ENCODE measurements at regions of chr17 and their contacts with region 1.

Region 1: GRCh38 chr17:45135192-45135977 is at the start of gene ACBD4:
- DNase-seq: peak; percentile 97
- ATAC-seq: peak; percentile 76
- H3K4me3 Mint-ChIP-seq: peak within 1 kb of the TSS; percentile 72
- H3K27ac Mint-ChIP-seq: no peak within 1 kb of the TSS
- H3K4me1 Mint-ChIP-seq: peaks cover 14% of the 10 kb centered on the region; the same call in 1 of the 2 replicates
- H3K27me3 Mint-ChIP-seq: no peaks in the 10 kb centered on the region; the same call in 1 of the 2 replicates
- CTCF ChIP-seq: peak; percentile 100
- total RNA-seq, gene ACBD4: 12.7 to 21.0 TPM (median 21.0 TPM) in 3 replicates

Region 2: GRCh38 chr17:44911133-44912001 is 224.0 kb before region 1 on chr17:
- CTCF ChIA-PET with region 1: interaction called, 12 read pairs
- POLR2A ChIA-PET with region 1: no interaction called
- DNase-seq: peak; percentile 83
- ATAC-seq: peak; percentile 91
- H3K4me3 Mint-ChIP-seq: peak overlapping the region; percentile 66
- H3K27ac Mint-ChIP-seq: no peak overlapping the region
- H3K4me1 Mint-ChIP-seq: peaks cover 7% of the 10 kb centered on the region
- H3K27me3 Mint-ChIP-seq: peaks cover 41% of the 10 kb centered on the region
- CTCF ChIP-seq: peak; percentile 13; the same call in 1 of the 2 replicates

Region 3: GRCh38 chr17:45013021-45013997 is 122.1 kb before region 1 on chr17:
- CTCF ChIA-PET with region 1: interaction called, 31 read pairs
- POLR2A ChIA-PET with region 1: no interaction called
- DNase-seq: peak; percentile 27
- ATAC-seq: peak; percentile 57
- H3K4me3 Mint-ChIP-seq: no peak overlapping the region
- H3K27ac Mint-ChIP-seq: peak overlapping the region; percentile 21; the same call in 1 of the 2 replicates
- H3K4me1 Mint-ChIP-seq: peaks cover 22% of the 10 kb centered on the region
- H3K27me3 Mint-ChIP-seq: peaks cover 12% of the 10 kb centered on the region
- CTCF ChIP-seq: no peak

Region 4: GRCh38 chr17:45060797-45061605 is 74.4 kb before region 1 on chr17 and contains the start of gene NMT1:
- CTCF ChIA-PET with region 1: interaction called, 19 read pairs
- POLR2A ChIA-PET with region 1: no interaction called
- DNase-seq: peak; percentile 98
- ATAC-seq: peak; percentile 96
- H3K4me3 Mint-ChIP-seq: peak within 1 kb of the TSS; percentile 99
- H3K27ac Mint-ChIP-seq: peak within 1 kb of the TSS; percentile 100
- H3K4me1 Mint-ChIP-seq: peaks cover 4% of the 10 kb centered on the region
- H3K27me3 Mint-ChIP-seq: no peaks in the 10 kb centered on the region
- CTCF ChIP-seq: no peak
- total RNA-seq, gene NMT1: 152 to 162 TPM (median 153 TPM) in 3 replicates

Region 5: DNA sequence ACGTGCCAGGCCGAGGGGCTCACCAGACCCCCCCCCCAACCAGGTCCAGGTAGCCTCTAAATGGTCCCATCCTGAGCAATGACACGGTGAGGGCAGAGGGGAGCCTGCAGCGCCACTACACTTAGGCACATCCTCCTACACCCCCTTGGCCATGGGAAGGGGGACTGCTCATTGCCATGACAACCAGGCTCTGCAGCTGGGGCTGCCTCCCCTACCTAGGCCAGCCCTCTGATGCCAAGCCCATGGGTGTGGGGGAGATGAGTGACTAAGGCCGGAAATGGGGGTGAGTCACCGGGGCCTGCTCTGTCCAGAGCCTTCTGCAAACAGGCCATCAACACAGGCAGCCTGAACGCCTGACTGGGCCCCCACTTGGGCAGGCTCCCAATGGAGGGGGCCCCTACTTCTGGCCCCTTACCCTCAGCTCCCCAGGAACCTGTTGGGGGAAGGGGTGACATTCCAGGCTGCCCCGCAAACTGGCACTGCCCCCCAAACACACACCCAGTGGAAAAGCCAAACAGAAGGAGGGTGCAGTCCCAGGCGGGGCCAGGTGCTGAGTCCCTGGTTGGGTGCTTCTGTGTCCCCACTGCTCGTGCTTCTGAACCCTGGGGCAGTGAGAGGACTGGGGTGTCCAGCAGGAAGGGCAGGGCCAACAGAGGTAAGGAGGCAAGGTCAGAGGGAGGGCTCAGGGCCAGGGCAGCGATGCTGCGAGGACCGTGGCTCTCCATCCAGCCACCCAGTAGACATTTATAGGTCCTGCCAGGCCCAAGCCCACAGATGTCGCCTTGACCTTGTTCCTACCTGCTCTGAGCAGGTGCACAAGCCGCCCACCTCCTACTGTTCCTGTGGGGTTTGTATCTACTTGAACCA is 11.2 kb before region 1 on chr17:
- CTCF ChIA-PET with region 1: interaction called, 27 read pairs
- POLR2A ChIA-PET with region 1: no interaction called
- DNase-seq: no peak
- ATAC-seq: peak; percentile 25
- H3K4me3 Mint-ChIP-seq: no peak overlapping the region
- H3K27ac Mint-ChIP-seq: peak overlapping the region; percentile 65; the same call in 1 of the 2 replicates
- H3K4me1 Mint-ChIP-seq: peaks cover 11% of the 10 kb centered on the region
- H3K27me3 Mint-ChIP-seq: no peaks in the 10 kb centered on the region
- CTCF ChIP-seq: no peak

Region 6: GRCh38 chr17:45184144-45184543 is 48.8 kb after region 1 on chr17:
- CTCF ChIA-PET with region 1: interaction called, 12 read pairs
- POLR2A ChIA-PET with region 1: no interaction called
- DNase-seq: no peak
- ATAC-seq: no peak
- H3K4me3 Mint-ChIP-seq: no peak overlapping the region
- H3K27ac Mint-ChIP-seq: no peak overlapping the region; the same call in 1 of the 2 replicates
- H3K4me1 Mint-ChIP-seq: no peaks in the 10 kb centered on the region
- H3K27me3 Mint-ChIP-seq: no peaks in the 10 kb centered on the region
- CTCF ChIP-seq: no peak

Region 7: DNA sequence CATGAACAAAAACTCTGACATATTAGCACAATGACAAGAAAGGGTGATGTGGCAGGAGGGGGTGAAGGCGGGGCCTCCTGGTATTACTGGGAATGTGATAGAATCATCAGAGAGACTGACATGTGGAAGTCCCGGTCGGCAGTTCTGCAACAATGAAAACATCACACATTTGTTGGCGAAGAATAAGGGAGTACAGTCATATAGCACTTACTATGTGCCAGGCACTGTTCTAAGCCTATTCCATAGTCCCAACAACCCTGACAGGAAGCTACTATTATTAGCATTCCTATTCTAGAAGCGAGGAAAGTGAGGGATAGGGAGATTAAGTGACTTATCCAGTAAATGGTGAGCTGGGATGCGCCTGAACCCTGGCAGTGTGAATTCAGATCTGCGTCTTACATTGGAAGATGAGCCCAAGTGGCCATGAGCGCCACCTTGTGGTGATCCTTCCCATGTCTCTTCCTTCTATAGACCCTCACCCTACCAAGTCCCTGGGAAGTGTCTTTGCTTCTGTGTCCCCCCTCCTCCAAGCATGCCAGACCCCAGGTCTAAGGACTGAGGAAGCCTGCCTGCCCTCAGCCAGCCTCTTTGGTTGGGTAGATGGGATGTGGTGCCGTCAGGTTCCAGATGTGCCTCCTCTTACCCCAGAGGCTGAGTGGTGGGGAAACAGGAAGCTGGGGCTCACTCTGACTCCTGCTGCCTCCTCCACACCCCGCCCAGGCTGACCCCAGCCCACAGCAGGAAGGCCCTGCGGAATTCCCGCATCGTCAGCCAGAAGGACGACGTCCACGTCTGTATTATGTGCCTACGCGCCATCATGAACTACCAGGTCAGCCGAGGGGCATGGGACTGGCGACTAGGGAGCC is 100.3 kb after region 1 on chr17:
- CTCF ChIA-PET with region 1: interaction called, 110 read pairs
- POLR2A ChIA-PET with region 1: no interaction called
- DNase-seq: peak; percentile 94
- ATAC-seq: peak; percentile 69
- H3K4me3 Mint-ChIP-seq: no peak overlapping the region
- H3K27ac Mint-ChIP-seq: no peak overlapping the region
- H3K4me1 Mint-ChIP-seq: peaks cover 9% of the 10 kb centered on the region
- H3K27me3 Mint-ChIP-seq: peaks cover 63% of the 10 kb centered on the region
- CTCF ChIP-seq: peak; percentile 81

Region 8: DNA sequence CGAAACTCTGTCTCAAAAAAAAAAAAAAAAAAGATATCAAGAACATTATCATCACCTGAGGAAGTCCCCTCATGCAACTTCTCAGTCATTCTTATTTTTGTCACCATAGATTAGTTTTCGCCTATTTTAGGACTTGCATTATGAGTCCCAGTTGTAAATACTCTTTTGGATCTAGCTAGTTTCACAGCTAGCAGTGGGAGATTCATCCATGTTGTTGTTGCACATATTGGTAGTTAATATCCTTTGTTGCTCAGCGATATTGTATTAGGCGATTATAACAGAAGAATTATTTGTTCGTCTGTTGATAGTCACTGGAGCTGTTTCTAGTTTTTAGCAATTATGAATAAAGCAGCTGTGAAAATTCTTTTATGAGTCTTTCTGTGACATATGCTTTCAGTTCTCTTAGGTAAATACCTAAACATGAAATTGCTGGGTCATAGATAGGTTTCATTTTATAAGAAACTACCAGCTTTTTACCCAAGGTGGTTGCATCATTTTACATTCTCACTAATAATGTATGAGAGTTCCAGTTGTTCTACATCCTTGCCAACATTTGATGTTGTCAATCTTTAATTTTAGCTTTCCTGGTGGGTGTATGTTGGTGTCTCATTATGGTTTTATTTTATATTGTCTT is 222.1 kb after region 1 on chr17:
- CTCF ChIA-PET with region 1: no interaction called
- POLR2A ChIA-PET with region 1: no interaction called
- DNase-seq: no peak
- ATAC-seq: no peak
- H3K4me3 Mint-ChIP-seq: no peak overlapping the region
- H3K27ac Mint-ChIP-seq: no peak overlapping the region
- H3K4me1 Mint-ChIP-seq: no peaks in the 10 kb centered on the region
- H3K27me3 Mint-ChIP-seq: peaks cover 17% of the 10 kb centered on the region
- CTCF ChIP-seq: no peak

Measured in WTC11 (cell line).